Spleen (tissue), 13 donors: ENCODE measurements at regions of chr4 and their contacts with region 1.

Region 1: DNA sequence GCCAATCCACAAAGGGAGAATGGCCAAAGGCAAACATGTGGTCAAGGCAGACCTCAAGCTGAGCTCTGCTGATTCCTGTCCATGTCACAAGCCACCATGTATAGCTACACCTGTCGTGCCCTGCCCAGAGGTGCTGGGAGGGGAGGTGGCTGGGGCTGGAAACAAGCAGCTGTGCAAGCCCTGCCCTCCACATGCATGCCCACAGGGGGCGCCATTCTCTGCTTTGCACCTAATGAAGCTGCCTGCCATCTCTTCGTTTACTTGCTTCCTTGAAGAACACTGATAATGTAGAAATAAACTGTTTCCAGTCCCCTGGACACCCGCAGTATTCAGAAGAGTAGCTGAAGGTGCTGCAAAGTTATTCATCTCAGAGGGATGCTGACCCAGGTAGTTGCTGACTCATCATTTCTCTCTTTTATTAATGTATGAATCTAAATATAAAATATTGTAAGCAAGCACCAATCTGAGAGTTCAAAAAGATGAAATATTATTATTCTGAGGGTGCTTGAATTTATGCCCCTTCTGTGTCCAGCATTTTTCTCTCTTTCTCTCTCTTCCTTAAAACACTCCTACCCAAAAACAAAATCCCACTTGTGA is 278.6 kb downstream of the ADGRA3 start:
- DNase-seq: peak; percentile 87
- H3K4me3 ChIP-seq: peak overlapping the region in 4 of 8 donors; percentile 10 to 50 (median 20)
- H3K27ac ChIP-seq: peak overlapping the region in 7 of 8 donors; percentile 27 to 70 (median 59)
- H3K4me1 ChIP-seq: peaks cover 0 to 6% (median 0%) of the 10 kb centered on the region in 6 donors
- H3K27me3 ChIP-seq: no peaks in the 10 kb centered on the region
- CTCF ChIP-seq: peak in 10 of 11 experiments; percentile 14 to 70 (median 54)
- POLR2A ChIP-seq: no peak

Region 2: GRCh38 chr4:22167201-22167600 is 70.1 kb before region 1 on chr4:
- intact Hi-C with region 1: no loop called
- DNase-seq: no peak
- H3K4me3 ChIP-seq: no peak overlapping the region
- H3K27ac ChIP-seq: no peak overlapping the region
- H3K4me1 ChIP-seq: no peaks in the 10 kb centered on the region
- H3K27me3 ChIP-seq: no peaks in the 10 kb centered on the region
- CTCF ChIP-seq: no peak
- POLR2A ChIP-seq: no peak

Region 3: DNA sequence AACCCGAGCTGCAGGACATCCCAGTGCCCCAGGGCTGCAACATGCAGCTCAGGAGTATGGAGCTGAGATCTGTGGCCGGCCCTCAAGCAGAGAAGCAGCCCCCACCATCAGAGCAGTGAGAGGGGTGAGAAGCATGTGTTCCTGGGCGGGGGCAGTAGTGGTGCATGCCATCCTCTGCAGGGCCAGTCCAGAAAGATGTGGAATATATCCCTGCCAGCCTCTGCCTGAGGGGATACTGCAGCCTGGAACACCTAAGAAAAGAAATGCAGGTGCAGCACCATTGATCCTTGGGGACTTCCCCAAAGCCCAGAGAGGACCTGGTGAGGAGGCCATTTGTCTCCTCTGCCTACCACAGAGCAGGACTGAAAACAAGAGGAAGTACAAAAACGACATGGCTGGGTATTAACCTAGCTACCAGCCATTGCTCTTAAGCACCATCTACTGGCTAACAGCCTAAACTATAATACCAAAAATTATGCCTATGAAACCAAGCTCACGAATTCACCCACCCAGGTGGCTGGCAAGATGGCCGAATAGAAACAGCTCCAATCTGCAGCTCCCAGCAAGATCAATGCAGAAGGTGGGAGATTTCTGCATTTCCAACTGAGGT is 119.8 kb after region 1 on chr4:
- intact Hi-C with region 1: loop called (anchors 10 kb)
- DNase-seq: no peak
- H3K4me3 ChIP-seq: no peak overlapping the region
- H3K27ac ChIP-seq: no peak overlapping the region
- H3K4me1 ChIP-seq: no peaks in the 10 kb centered on the region
- H3K27me3 ChIP-seq: no peaks in the 10 kb centered on the region
- CTCF ChIP-seq: peak in 4 of 11 experiments; percentile 8 to 39 (median 22)
- POLR2A ChIP-seq: no peak